Activated CD4-positive, alpha-beta memory T cell treated with anti-CD3 and anti-CD28 coated beads for 36 hours (primary cell): ENCODE measurements at regions of chr19 and their contacts with region 1.

Region 1: GRCh38 chr19:12639901-12640613 is 26.5 kb downstream of the MAN2B1 start:
- DNase-seq: peak; percentile 94
- H3K4me3 Mint-ChIP-seq: peak overlapping the region; percentile 58
- H3K27ac Mint-ChIP-seq: peak overlapping the region; percentile 59
- H3K4me1 Mint-ChIP-seq: peaks cover 16% of the 10 kb centered on the region
- H3K27me3 Mint-ChIP-seq: no peaks in the 10 kb centered on the region

Region 2: GRCh38 chr19:12564016-12564664 is 75.9 kb before region 1 on chr19:
- CTCF ChIA-PET with region 1: interaction called, 4 read pairs
- POLR2A ChIA-PET with region 1: interaction called, 3 read pairs
- intact Hi-C with region 1: loop called (anchors 1 kb)
- DNase-seq: peak; percentile 95
- H3K4me3 Mint-ChIP-seq: no peak overlapping the region
- H3K27ac Mint-ChIP-seq: peak overlapping the region; percentile 19
- H3K4me1 Mint-ChIP-seq: peaks cover 5% of the 10 kb centered on the region
- H3K27me3 Mint-ChIP-seq: no peaks in the 10 kb centered on the region

Region 3: GRCh38 chr19:12623361-12624022 is 16.6 kb before region 1 on chr19:
- CTCF ChIA-PET with region 1: interaction called, 10 read pairs
- POLR2A ChIA-PET with region 1: no interaction called
- intact Hi-C with region 1: no loop called
- DNase-seq: no peak
- H3K4me3 Mint-ChIP-seq: no peak overlapping the region
- H3K27ac Mint-ChIP-seq: no peak overlapping the region
- H3K4me1 Mint-ChIP-seq: peaks cover 5% of the 10 kb centered on the region
- H3K27me3 Mint-ChIP-seq: no peaks in the 10 kb centered on the region

Region 4: GRCh38 chr19:12666265-12667048 is 26.4 kb after region 1 on chr19 and contains the starts of genes MAN2B1 and WDR83:
- CTCF ChIA-PET with region 1: interaction called, 18 read pairs
- POLR2A ChIA-PET with region 1: interaction called, 3 read pairs
- intact Hi-C with region 1: loop called (anchors 1 kb)
- DNase-seq: peak; percentile 87
- H3K4me3 Mint-ChIP-seq: peak within 1 kb of the TSS; percentile 87
- H3K27ac Mint-ChIP-seq: peak within 1 kb of the TSS; percentile 87
- H3K4me1 Mint-ChIP-seq: peaks cover 47% of the 10 kb centered on the region
- H3K27me3 Mint-ChIP-seq: no peaks in the 10 kb centered on the region
- total RNA-seq, gene MAN2B1: 123 to 127 TPM
- total RNA-seq, gene WDR83: 17.1 to 17.8 TPM

Region 5: DNA sequence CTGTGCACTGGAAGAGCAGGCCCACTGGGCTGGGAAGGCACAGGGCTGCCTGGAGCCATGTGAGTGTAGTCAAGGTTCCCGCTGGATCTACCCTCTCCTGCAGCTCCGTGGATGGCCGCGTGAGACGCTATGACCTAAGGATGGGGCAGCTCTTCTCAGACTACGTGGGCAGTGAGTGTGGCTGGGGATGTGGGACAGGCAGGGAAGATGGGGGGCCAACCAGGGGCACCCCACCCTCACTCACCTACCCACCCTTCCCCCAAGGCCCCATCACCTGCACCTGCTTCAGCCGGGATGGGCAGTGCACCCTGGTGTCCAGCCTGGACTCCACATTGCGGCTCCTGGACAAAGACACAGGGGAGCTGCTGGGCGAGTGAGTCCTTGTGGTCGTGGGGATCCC is 32.7 kb after region 1 on chr19:
- CTCF ChIA-PET with region 1: interaction called, 18 read pairs
- POLR2A ChIA-PET with region 1: no interaction called
- intact Hi-C with region 1: no loop called
- DNase-seq: no peak
- H3K4me3 Mint-ChIP-seq: no peak overlapping the region
- H3K27ac Mint-ChIP-seq: no peak overlapping the region
- H3K4me1 Mint-ChIP-seq: peaks cover 34% of the 10 kb centered on the region
- H3K27me3 Mint-ChIP-seq: no peaks in the 10 kb centered on the region